ENCODE measurements at regions of chr11 and their contacts with region 1.

Region 1: GRCh38 chr11:64916775-64917662 is at the start of gene ATG2A:
- DNase-seq: peak; percentile 99 to 100
- H3K4me3 ChIP-seq: peak within 1 kb of the TSS; percentile 52 to 89
- H3K27ac ChIP-seq: peak within 1 kb of the TSS; percentile 85
- H3K4me1 ChIP-seq: peaks cover 34% of the 10 kb centered on the region
- H3K27me3 ChIP-seq: no peaks in the 10 kb centered on the region
- CTCF ChIP-seq: no peak
- POLR2A ChIP-seq: peak in 1 of 2 donors; percentile 83
- total RNA-seq, gene ATG2A: 27.0 TPM

Region 2: DNA sequence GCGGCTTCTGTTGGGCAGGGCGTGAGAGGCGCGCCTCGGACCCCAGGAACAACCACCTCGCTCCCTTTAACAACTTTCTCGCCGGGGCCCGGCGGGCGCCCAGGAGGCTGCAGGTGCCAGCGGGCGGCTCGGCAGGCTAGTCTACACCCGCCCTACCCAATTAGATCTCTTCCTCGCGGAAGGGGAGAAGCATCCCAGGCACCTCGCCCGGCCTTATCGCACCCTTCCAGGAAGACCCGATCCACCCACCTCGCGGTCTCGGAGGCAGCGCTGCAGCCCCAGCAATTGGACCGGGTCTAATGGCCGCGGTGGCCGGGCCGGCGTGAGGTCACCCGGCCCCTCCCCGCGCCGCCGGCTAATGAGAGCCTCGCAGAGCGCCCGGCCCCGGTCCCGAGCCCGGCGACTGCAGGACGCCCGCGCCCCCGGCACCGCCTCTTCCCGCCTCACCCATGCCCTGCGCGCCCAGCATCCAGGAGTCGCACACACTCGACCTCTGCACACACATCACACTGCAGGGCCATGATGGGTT is 1302.8 kb before region 1 on chr11 and contains the start of gene PLAAT3:
- intact Hi-C with region 1: loop called (anchors 10 kb)
- DNase-seq: no peak
- H3K4me3 ChIP-seq: peak within 1 kb of the TSS; percentile 69
- H3K27ac ChIP-seq: peak within 1 kb of the TSS; percentile 67
- H3K4me1 ChIP-seq: peaks cover 32% of the 10 kb centered on the region
- H3K27me3 ChIP-seq: no peaks in the 10 kb centered on the region
- CTCF ChIP-seq: no peak
- POLR2A ChIP-seq: no peak
- total RNA-seq, gene PLAAT3: 17.2 TPM

Region 3: GRCh38 chr11:65180877-65181568 is 264.0 kb after region 1 on chr11:
- intact Hi-C with region 1: no loop called
- DNase-seq: no peak
- H3K4me3 ChIP-seq: peak overlapping the region; percentile 94 to 97
- H3K27ac ChIP-seq: peak overlapping the region; percentile 89
- H3K4me1 ChIP-seq: peaks cover 43% of the 10 kb centered on the region
- H3K27me3 ChIP-seq: no peaks in the 10 kb centered on the region
- CTCF ChIP-seq: peak in 2 of 3 experiments; percentile 35 to 37
- POLR2A ChIP-seq: no peak

Measured in vagina (tissue), 2 donors.